PC-9 (cell line): ENCODE measurements at regions of chr10 and their contacts with region 1.

Region 1: GRCh38 chr10:33038672-33039071 is 80.6 kb upstream of the ITGB1 start:
- DNase-seq: no peak
- H3K4me3 ChIP-seq: no peak overlapping the region
- H3K27ac ChIP-seq: no peak overlapping the region
- H3K4me1 ChIP-seq: no peaks in the 10 kb centered on the region
- H3K27me3 ChIP-seq: no peaks in the 10 kb centered on the region
- CTCF ChIP-seq: no peak

Region 2: DNA sequence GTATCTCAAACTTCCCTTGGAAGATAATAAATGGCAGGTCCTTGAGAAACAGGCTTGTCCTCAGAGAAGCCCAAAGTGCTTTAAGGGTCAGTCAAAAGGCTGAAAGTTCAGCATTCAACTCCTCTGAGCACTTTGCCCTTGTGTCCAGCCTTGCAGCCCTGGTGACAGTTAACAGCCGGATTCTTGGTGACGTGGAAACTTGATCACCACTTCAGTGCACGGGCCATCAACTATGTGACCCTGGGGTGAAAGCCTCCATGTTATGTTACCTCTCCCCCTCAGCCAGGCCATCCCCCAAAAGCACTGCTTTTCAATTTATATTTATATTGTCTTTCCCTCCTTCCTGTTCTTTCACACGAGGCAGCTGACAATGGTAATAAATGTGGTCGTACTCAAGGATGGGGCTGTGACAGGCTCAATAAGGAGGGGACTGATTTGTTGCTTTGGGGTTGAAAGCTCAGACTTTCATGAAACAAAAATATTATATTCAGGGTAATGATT is 459.8 kb after region 1 on chr10:
- CTCF ChIA-PET with region 1: no interaction called
- POLR2A ChIA-PET with region 1: interaction called, 12 read pairs
- intact Hi-C with region 1: no loop called
- DNase-seq: no peak
- H3K4me3 ChIP-seq: no peak overlapping the region
- H3K27ac ChIP-seq: no peak overlapping the region
- H3K4me1 ChIP-seq: no peaks in the 10 kb centered on the region
- H3K27me3 ChIP-seq: no peaks in the 10 kb centered on the region
- CTCF ChIP-seq: no peak